GM12878 (cell line): ENCODE measurements at regions of chr14 and their contacts with region 1.

Region 1: GRCh38 chr14:92783816-92784431 is 10.2 kb upstream of the GOLGA5 start:
- DNase-seq: no peak
- ATAC-seq: peak; percentile 88
- H3K4me3 ChIP-seq: no peak overlapping the region
- H3K27ac ChIP-seq: no peak overlapping the region
- H3K4me1 ChIP-seq: 0 out of 2 replicates have a peak, but pooled peaks cover 3% of the 10 kb centered on the region
- H3K27me3 ChIP-seq: no peaks in the 10 kb centered on the region
- CTCF ChIP-seq: peak; percentile 52 to 66 (median 62); a peak in 5 of 6 replicates
- EP300 ChIP-seq: no peak
- POLR2A ChIP-seq: no peak
- RAD21 ChIP-seq: peak; percentile 77

Region 2: DNA sequence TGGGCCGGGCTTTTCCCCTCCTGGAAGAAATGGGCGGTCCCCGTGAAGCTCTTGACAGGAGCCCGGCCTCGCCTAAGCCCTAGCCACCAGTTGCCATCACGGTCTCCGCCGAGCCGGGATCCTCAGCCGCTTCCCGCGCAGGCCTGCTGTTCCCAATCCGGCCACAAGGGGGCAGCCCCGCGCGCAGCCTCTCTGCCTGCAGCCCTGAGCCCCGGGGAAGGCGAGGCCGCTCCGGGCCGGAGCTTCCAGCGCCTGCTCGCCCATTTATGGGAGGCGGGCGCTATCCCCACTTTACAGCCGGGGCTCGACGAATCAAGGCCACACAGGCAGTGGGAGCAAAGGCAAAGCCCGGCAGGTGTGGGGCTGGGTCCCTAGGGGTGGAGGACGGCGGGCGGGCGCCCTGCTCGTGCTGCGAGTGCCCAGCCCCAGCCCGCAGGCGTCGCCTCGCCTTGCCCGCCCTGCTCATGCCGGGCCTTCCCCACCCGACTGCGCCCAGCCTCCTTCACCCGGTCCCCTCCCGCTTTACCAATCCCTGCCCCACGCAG is 97.0 kb before region 1 on chr14:
- CTCF ChIA-PET with region 1: interaction called, 17 read pairs
- POLR2A ChIA-PET with region 1: no interaction called
- RAD21 ChIA-PET with region 1: interaction called, 5 read pairs
- SMC1A ChIA-PET with region 1: interaction called, 8 read pairs
- in situ Hi-C with region 1: no loop called
- intact Hi-C with region 1: loop called (anchors 2 kb)
- DNase-seq: no peak
- ATAC-seq: peak; percentile 82
- H3K4me3 ChIP-seq: no peak overlapping the region
- H3K27ac ChIP-seq: no peak overlapping the region
- H3K4me1 ChIP-seq: no peaks in the 10 kb centered on the region
- H3K27me3 ChIP-seq: no peaks in the 10 kb centered on the region
- CTCF ChIP-seq: peak; percentile 78 to 89 (median 84)
- EP300 ChIP-seq: no peak
- POLR2A ChIP-seq: no peak
- RAD21 ChIP-seq: peak; percentile 64

Region 3: DNA sequence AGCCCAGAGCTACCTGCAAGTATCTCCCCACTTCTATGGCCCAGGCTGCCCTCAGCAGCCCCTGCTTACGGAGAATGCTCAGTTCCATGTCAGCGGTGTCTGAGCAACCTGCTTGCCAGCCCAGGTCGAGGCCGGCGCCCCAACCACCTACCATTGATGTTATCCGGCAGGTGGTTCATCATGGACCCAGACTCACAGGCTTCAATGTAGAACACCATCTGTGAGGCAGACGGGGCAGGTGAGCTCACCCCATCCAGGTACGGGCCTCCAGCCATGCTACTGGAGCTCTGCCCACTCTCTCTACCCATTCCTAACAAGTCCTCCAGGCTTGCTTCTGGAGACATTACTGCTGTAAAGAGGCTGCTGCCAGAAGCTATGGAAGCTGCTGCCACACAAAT is 71.3 kb before region 1 on chr14:
- CTCF ChIA-PET with region 1: interaction called, 122 read pairs
- POLR2A ChIA-PET with region 1: interaction called, 7 read pairs
- RAD21 ChIA-PET with region 1: interaction called, 106 read pairs
- SMC1A ChIA-PET with region 1: interaction called, 151 read pairs
- in situ Hi-C with region 1: loop called (anchors 5 kb)
- intact Hi-C with region 1: loop called (anchors 1 kb)
- DNase-seq: no peak
- ATAC-seq: no peak
- H3K4me3 ChIP-seq: no peak overlapping the region
- H3K27ac ChIP-seq: no peak overlapping the region
- H3K4me1 ChIP-seq: no peaks in the 10 kb centered on the region
- H3K27me3 ChIP-seq: no peaks in the 10 kb centered on the region
- CTCF ChIP-seq: no peak
- EP300 ChIP-seq: no peak
- POLR2A ChIP-seq: no peak
- RAD21 ChIP-seq: no peak

Region 4: DNA sequence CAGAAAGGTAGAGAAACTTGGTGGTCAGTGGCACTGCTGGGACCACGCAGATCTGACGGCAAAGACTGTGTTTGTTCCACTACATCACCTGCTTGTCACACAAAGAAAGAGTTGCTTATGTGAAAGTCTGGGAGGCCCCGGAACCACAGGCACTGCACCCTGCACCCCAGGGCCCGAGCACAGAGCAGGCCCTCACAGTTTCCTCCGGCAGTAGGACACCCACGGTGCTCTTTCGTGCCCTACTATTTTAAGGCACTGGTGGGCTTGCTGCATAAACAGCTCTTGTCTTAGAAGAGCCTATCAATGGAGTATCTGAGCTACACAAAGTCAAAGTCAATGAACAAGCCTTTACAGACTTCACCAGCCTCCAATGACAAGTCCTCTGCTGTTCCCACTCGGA is 43.5 kb before region 1 on chr14:
- CTCF ChIA-PET with region 1: interaction called, 4 read pairs
- POLR2A ChIA-PET with region 1: interaction called, 4 read pairs
- RAD21 ChIA-PET with region 1: interaction called, 3 read pairs
- SMC1A ChIA-PET with region 1: interaction called, 4 read pairs
- in situ Hi-C with region 1: no loop called
- intact Hi-C with region 1: loop called (anchors 2 kb)
- DNase-seq: no peak
- ATAC-seq: peak; percentile 66
- H3K4me3 ChIP-seq: no peak overlapping the region
- H3K27ac ChIP-seq: no peak overlapping the region
- H3K4me1 ChIP-seq: 0 out of 2 replicates have a peak, but pooled peaks cover 2% of the 10 kb centered on the region
- H3K27me3 ChIP-seq: no peaks in the 10 kb centered on the region
- CTCF ChIP-seq: no peak
- EP300 ChIP-seq: no peak
- POLR2A ChIP-seq: no peak
- RAD21 ChIP-seq: no peak

Region 5: DNA sequence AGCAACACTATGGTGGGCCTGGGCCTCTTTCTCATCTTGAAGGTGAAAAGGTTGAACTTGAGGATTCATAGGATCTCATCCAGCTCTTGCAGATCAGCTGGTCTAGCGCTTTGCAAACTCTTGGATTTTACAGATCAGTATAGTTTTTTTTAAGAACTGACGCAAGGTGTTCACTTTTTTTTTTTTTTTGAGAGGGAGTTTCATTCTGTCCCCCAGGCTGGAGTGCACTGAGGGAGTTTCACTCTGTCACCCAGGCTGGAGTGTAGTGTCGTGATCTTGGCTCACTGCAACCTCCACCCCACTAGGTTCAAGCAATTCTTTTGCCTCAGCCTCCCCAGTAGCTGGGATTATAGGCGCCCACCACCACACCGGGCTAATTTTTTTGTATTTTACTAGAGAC is 15.1 kb before region 1 on chr14:
- CTCF ChIA-PET with region 1: interaction called, 5 read pairs
- POLR2A ChIA-PET with region 1: interaction called, 6 read pairs
- RAD21 ChIA-PET with region 1: interaction called, 11 read pairs
- SMC1A ChIA-PET with region 1: interaction called, 8 read pairs
- in situ Hi-C with region 1: no loop called
- intact Hi-C with region 1: no loop called
- DNase-seq: no peak
- ATAC-seq: peak; percentile 16; the same call in 2 of the 3 replicates
- H3K4me3 ChIP-seq: no peak overlapping the region
- H3K27ac ChIP-seq: no peak overlapping the region
- H3K4me1 ChIP-seq: peaks cover 28% of the 10 kb centered on the region
- H3K27me3 ChIP-seq: peaks cover 0 to 2% of the 10 kb centered on the region in 2 experiments; a peak in 1 of 4 replicates
- CTCF ChIP-seq: no peak
- EP300 ChIP-seq: no peak
- POLR2A ChIP-seq: no peak
- RAD21 ChIP-seq: no peak

Region 6: GRCh38 chr14:92813201-92813600 is 29.3 kb after region 1 on chr14:
- CTCF ChIA-PET with region 1: no interaction called
- POLR2A ChIA-PET with region 1: no interaction called
- RAD21 ChIA-PET with region 1: no interaction called
- SMC1A ChIA-PET with region 1: no interaction called
- in situ Hi-C with region 1: no loop called
- intact Hi-C with region 1: no loop called
- DNase-seq: no peak
- ATAC-seq: no peak
- H3K4me3 ChIP-seq: no peak overlapping the region
- H3K27ac ChIP-seq: no peak overlapping the region
- H3K4me1 ChIP-seq: no peaks in the 10 kb centered on the region
- H3K27me3 ChIP-seq: no peaks in the 10 kb centered on the region
- CTCF ChIP-seq: no peak
- EP300 ChIP-seq: no peak
- POLR2A ChIP-seq: no peak
- RAD21 ChIP-seq: no peak